Activated CD4-positive, alpha-beta memory T cell treated with anti-CD3 and anti-CD28 coated beads, Interleukin-2, amount 10 ng/mL, durations not matched to agents 7 days and 5 days (primary cell): ENCODE measurements at regions of chr15 and their contacts with region 1.

Region 1: DNA sequence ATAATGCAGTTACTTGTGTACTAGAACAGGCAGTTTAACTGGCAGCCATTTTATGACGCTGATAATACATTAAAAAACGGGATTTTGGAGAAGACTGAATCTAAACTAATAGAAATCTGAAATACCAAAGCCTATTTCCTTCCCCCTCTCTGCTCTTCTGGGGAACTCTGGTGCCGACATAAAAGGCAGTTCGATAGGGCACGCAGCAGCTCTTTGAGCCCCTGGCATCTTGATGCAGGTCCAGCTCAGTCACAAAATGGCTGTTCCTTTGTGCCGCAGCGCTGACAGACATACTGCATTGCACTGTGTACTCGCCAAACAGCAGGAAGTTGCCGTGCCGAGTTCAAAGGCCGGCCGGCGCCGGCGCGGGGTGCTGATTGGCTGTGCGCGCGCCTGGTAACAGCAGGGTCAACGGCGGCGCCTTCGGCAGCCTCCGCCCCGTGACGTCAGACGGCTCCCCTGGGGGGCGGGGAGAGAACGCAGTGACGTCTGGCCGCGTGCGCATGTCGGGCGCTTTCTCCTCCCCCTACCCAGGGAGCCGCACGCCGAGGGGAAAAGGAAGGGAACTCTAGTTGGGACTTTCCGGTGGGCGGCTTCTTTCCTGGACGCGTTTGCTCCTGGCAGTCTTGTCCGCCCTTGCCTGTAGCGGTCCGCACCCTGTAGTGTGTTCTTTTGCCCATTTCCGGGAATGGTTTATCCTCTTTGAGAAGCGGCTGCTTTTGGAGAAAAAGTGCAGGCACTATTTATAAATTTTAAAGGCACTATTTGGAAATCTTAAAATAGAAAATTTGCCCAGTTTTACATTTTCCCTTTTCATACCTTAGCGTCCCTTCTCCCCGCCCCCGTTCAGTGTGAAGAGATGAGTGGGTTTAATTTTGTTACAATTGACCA is 4.1 kb downstream of the CHD2 start:
- DNase-seq: peak; percentile 100
- H3K4me3 Mint-ChIP-seq: peak overlapping the region; percentile 92
- H3K27ac Mint-ChIP-seq: peak overlapping the region; percentile 100
- H3K4me1 Mint-ChIP-seq: peaks cover 55% of the 10 kb centered on the region
- H3K27me3 Mint-ChIP-seq: no peaks in the 10 kb centered on the region

Region 2: GRCh38 chr15:92820236-92821021 is 83.8 kb before region 1 on chr15:
- CTCF ChIA-PET with region 1: interaction called, 5 read pairs
- POLR2A ChIA-PET with region 1: interaction called, 100 read pairs
- DNase-seq: peak; percentile 88
- H3K4me3 Mint-ChIP-seq: peak overlapping the region; percentile 78
- H3K27ac Mint-ChIP-seq: peak overlapping the region; percentile 93
- H3K4me1 Mint-ChIP-seq: peaks cover 66% of the 10 kb centered on the region
- H3K27me3 Mint-ChIP-seq: no peaks in the 10 kb centered on the region

Region 3: GRCh38 chr15:92845126-92845508 is 59.1 kb before region 1 on chr15:
- CTCF ChIA-PET with region 1: no interaction called
- POLR2A ChIA-PET with region 1: interaction called, 10 read pairs
- DNase-seq: no peak
- H3K4me3 Mint-ChIP-seq: peak overlapping the region; percentile 58
- H3K27ac Mint-ChIP-seq: peak overlapping the region; percentile 96
- H3K4me1 Mint-ChIP-seq: peaks cover 61% of the 10 kb centered on the region
- H3K27me3 Mint-ChIP-seq: no peaks in the 10 kb centered on the region

Region 4: GRCh38 chr15:92924216-92924615 is 20.0 kb after region 1 on chr15:
- CTCF ChIA-PET with region 1: interaction called, 69 read pairs
- POLR2A ChIA-PET with region 1: interaction called, 413 read pairs
- DNase-seq: no peak
- H3K4me3 Mint-ChIP-seq: no peak overlapping the region
- H3K27ac Mint-ChIP-seq: peak overlapping the region; percentile 11
- H3K4me1 Mint-ChIP-seq: peaks cover 75% of the 10 kb centered on the region
- H3K27me3 Mint-ChIP-seq: no peaks in the 10 kb centered on the region

Region 5: GRCh38 chr15:93217343-93217742 is 313.2 kb after region 1 on chr15:
- CTCF ChIA-PET with region 1: no interaction called
- POLR2A ChIA-PET with region 1: no interaction called
- DNase-seq: no peak
- H3K4me3 Mint-ChIP-seq: no peak overlapping the region
- H3K27ac Mint-ChIP-seq: no peak overlapping the region
- H3K4me1 Mint-ChIP-seq: peaks cover 4% of the 10 kb centered on the region
- H3K27me3 Mint-ChIP-seq: peaks cover 14% of the 10 kb centered on the region